ENCODE measurements at regions of chr7 and their contacts with region 1.

Region 1: DNA sequence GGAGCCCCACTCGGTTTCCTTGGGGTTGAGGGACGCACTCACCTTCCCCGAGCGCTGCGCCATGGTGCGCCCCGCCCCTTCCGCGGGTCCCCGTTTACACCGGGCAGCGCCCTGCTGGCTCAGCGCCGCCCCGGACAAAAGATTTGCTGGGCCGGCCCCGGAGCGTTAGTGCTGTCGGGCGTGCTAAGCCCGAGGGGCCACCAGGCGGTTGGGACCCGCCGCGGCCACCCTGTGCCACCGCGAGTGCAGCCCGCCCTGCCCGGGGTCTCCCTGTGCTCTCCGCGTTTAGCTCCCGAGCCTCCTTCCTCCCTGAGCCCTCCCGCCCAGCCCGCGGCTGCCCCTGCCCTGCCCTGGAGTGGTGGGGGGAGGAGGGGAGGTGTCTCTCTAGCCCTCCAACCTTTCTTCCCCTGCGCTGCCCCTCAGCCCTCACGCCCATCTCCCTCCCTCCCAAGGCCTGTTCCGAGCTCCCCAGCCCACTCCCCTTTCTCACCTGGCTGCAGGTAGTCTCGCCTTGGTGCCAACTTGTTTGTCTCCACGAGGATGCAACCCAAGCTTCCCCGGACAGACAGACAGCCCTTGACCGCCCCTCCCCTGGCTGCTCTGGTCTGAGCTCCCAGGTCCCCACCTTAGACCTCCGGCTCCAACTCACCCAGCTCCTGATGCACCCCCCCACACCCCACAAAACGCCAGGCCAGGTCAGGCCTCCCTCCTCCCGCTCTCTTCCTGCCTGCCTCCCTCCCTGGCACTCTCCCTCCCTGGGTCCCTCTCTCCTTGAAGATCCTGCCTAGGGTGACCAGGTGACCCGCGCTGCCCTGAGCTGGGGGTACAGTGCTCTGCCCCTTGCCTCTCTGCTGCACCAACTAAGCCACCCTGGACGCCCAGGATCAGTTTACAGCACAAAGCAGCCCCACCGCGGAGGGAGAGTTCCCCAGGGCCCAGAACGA is at the start of gene CRYGN:
- DNase-seq: no peak
- H3K4me3 ChIP-seq: peak within 1 kb of the TSS in 1 of 3 experiments; percentile 22
- H3K27ac ChIP-seq: no peak within 1 kb of the TSS
- H3K4me1 ChIP-seq: no peaks in the 10 kb centered on the region
- H3K27me3 ChIP-seq: no peaks in the 10 kb centered on the region
- CTCF ChIP-seq: no peak
- total RNA-seq, gene CRYGN: not detected

Region 2: GRCh38 chr7:151368136-151368571 is 72.0 kb before region 1 on chr7:
- CTCF ChIA-PET with region 1: interaction called, 3 read pairs
- dilution Hi-C with region 1: loop called (anchors 5 kb)
- in situ Hi-C with region 1: loop called (anchors 5 to 10 kb)
- intact Hi-C with region 1: no loop called
- DNase-seq: peak; percentile 61
- H3K4me3 ChIP-seq: no peak overlapping the region
- H3K27ac ChIP-seq: no peak overlapping the region
- H3K4me1 ChIP-seq: peaks cover 3% of the 10 kb centered on the region
- H3K27me3 ChIP-seq: no peaks in the 10 kb centered on the region
- CTCF ChIP-seq: peak; percentile 91 to 97

Measured in mammary epithelial cell (primary cell).